ENCODE measurements at regions of chr19 and their contacts with region 1.

Region 1: DNA sequence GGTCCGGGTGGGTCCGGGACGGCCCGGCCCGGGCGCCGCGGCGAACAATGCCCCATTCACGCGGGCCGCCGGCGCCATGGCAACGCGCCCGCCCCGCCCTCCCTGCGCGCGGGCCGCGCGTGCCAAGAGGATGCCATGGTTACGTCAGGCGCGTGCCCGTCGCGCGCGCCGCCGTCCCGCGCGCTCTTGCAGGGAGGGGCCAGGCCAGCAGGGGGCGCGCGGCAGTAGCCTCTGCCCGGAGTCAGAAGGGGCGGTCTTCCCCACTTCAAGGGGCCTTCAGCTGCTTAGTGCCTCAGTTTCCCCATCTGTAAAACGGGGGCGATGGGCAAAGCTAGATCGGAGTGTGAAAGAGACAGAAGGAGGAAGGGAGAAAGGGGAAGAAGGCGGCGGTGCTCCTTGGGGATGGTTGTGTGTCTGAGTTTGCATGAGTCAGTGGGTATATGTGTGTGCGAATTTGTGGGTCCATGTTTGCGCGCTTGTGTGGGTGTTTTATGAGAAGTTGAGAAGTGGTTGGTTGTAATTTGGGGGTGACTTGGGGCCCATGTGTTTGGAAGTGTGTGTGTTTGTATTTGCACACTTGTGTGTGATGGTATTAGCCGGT is 11.6 kb upstream of the NFIX start:
- DNase-seq: peak; percentile 65 to 95 (median 87)
- ATAC-seq: peak; percentile 91 to 95 (median 91)
- H3K4me3 ChIP-seq: peak overlapping the region in 1 of 4 donors; percentile 26
- H3K27ac ChIP-seq: no peak overlapping the region
- H3K4me1 ChIP-seq: peaks cover 0 to 3% (median 0%) of the 10 kb centered on the region in 3 donors
- H3K27me3 ChIP-seq: no peaks in the 10 kb centered on the region
- CTCF ChIP-seq: peak; percentile 86 to 95 (median 94)

Region 2: DNA sequence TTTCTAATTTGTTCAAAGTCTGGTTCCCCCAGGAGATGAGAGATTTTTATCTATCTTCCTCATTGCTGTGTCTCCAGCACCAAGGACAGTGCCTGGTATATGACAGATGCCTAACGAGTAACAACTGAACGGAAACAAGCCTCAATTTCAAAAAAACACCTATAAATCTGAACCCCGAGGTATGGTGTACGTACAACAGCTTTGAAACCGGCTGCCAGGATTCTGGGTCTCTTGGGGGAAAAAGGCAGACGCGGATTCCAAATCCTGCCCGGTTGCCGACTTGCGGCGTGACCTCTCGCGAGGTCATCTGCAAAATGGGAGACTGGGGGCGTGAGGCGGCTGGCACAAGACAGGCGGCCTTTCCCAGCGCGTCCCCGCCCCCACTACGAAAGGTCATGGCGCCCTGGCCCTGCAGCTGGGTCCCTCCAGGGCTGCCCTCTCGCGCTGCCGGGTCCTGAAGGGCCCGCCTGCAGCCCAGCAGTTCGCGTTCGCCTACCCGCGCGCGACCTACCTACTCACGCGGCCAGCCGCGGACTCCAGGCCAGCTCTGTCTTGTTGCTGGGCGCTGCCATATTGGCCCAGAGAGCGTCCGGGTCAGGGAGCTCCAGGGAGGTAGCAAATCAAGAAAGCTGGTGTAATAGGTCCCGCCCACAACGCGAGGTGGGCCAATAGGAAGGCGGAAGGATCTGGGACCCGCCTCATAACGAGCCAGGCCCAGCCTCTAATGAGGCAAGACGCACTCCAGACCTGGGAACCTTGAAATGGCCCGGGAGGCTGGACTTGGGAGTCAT is 1454.9 kb before region 1 on chr19 and contains the start of gene ECSIT:
- intact Hi-C with region 1: no loop called
- DNase-seq: peak; percentile 91 to 99 (median 98)
- ATAC-seq: peak; percentile 98 to 99 (median 98)
- H3K4me3 ChIP-seq: peak within 1 kb of the TSS; percentile 66 to 82 (median 76)
- H3K27ac ChIP-seq: peak within 1 kb of the TSS; percentile 83 to 89 (median 85)
- H3K4me1 ChIP-seq: peaks cover 8 to 11% (median 10%) of the 10 kb centered on the region in 3 donors
- H3K27me3 ChIP-seq: no peaks in the 10 kb centered on the region
- CTCF ChIP-seq: peak in 1 of 4 donors; percentile 12
- total RNA-seq, gene ECSIT: 32.1 to 54.8 (median 36.9) TPM

Region 3: GRCh38 chr19:12890787-12891552 is 92.7 kb before region 1 on chr19 and contains the start of gene GCDH:
- intact Hi-C with region 1: no loop called
- DNase-seq: peak; percentile 91 to 99 (median 98)
- ATAC-seq: peak; percentile 96 to 99 (median 96)
- H3K4me3 ChIP-seq: peak within 1 kb of the TSS; percentile 43 to 99 (median 87)
- H3K27ac ChIP-seq: peak within 1 kb of the TSS; percentile 51 to 85 (median 62)
- H3K4me1 ChIP-seq: peaks cover 0 to 7% (median 0%) of the 10 kb centered on the region in 3 donors
- H3K27me3 ChIP-seq: no peaks in the 10 kb centered on the region
- CTCF ChIP-seq: no peak
- total RNA-seq, gene GCDH: 6.3 to 17.2 (median 11.7) TPM

Region 4: DNA sequence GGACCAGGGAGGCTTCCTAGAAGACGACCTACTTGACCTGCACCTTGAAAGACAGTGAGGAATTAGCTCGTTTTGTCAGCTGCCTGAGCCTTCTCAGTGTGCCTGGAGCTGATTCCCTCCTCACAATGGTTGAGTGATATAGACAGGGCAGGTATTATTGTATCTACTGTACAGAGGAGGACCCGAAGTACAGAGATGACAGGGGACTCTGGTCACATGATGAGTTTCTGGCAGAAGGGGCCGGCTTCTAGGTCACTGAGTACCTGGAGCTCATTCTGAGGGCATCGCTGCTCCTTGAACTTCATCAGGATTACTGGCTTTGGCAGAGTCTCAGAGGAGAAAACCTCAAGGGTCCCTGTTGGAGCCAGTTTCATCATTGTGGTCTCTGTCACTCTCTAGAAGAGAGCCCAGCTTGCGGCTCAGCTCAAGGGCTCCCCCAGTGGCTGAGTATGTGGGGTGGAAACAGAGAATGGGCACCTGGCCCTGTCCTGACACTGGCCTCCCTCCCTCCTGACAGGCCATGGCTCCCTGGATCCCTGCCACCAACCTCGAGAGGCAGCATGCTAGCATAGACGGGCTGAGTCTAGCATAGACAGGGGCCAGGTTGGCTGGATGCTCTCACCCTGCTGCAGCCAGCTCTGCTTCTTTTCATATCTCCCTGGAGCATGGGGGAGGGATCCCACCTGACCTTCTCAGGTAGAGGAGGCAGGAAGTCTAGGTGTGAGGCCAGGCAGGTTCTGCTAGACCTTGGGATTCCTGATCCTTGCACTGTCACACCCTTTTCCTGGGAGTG is 50.4 kb after region 1 on chr19:
- intact Hi-C with region 1: loop called in 1 of 3 experiments (anchors 5 kb)
- DNase-seq: peak; percentile 82 to 93 (median 88)
- ATAC-seq: peak; percentile 87 to 91 (median 88)
- H3K4me3 ChIP-seq: no peak overlapping the region
- H3K27ac ChIP-seq: peak overlapping the region in 3 of 4 donors; percentile 46 to 61 (median 50)
- H3K4me1 ChIP-seq: peaks cover 5 to 45% (median 31%) of the 10 kb centered on the region in 3 donors
- H3K27me3 ChIP-seq: no peaks in the 10 kb centered on the region
- CTCF ChIP-seq: peak; percentile 71 to 83 (median 79)

Region 5: DNA sequence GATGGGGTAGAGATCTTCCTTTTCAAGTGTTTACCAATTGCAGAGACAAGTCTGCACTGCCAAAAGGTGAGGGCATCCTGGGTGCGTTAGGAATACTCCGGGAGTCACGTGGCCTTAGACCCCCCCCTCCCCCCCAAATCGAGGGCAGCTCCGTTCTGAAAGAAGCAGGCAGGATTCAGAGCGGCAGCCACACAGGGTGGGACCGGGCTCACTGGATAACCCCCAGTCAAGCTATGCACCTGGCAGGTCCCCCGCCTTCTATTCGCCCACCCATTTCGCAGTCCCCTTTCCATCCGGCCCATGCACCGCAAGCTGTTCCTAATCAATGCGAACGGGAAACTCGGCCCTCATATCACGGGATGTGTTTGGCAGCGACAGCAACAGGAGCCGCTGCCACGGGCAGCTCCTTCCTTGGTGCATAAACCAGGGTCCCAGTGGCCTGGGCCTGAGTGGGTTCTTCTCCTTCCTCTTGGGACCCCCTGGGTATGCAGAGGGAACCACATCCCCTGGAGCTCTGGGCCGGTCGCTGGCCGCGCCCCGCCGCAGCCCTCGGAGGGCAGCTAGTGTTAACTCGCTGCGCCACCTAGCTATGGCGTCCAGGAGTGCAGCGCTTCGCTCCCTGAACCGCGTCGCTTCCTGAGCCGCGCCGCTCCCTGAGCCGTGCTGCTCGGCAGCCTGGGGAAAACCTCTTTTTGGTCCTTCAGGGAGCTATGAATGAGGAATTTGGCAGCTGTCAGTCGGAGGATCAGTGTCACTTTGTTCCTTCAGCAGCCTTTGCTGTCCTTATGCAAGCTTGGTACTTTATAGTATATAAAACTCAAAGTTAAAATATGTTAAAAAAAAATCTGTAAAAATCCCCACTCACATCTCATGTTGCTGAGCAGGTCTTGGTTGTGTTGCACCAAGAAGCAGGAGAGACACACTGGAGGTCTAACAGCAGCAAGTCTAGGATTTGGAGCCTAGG is 77.6 kb after region 1 on chr19:
- intact Hi-C with region 1: loop called in 2 of 3 experiments (anchors 5 to 10 kb)
- DNase-seq: peak; percentile 68 to 95 (median 83)
- ATAC-seq: peak; percentile 87 to 96 (median 95)
- H3K4me3 ChIP-seq: peak overlapping the region in 3 of 4 donors; percentile 13 to 37 (median 28)
- H3K27ac ChIP-seq: peak overlapping the region; percentile 40 to 65 (median 57)
- H3K4me1 ChIP-seq: peaks cover 13 to 15% (median 15%) of the 10 kb centered on the region in 3 donors
- H3K27me3 ChIP-seq: no peaks in the 10 kb centered on the region
- CTCF ChIP-seq: peak; percentile 86 to 95 (median 90)

Region 6: GRCh38 chr19:13262450-13262849 is 278.8 kb after region 1 on chr19:
- intact Hi-C with region 1: loop called in 2 of 3 experiments (anchors 5 to 10 kb)
- DNase-seq: peak in 1 of 6 donors; percentile 17
- ATAC-seq: peak; percentile 61 to 95 (median 84)
- H3K4me3 ChIP-seq: no peak overlapping the region
- H3K27ac ChIP-seq: no peak overlapping the region
- H3K4me1 ChIP-seq: no peaks in the 10 kb centered on the region
- H3K27me3 ChIP-seq: no peaks in the 10 kb centered on the region
- CTCF ChIP-seq: peak in 3 of 4 donors; percentile 18 to 35 (median 25)

Measured in pancreas (tissue), 10 donors.